ENCODE measurements at regions of chr5 and their contacts with region 1.

Region 1: GRCh38 chr5:170404402-170404801 is 15.2 kb upstream of the KCNMB1 start:
- DNase-seq: no peak
- H3K4me3 ChIP-seq: no peak overlapping the region
- CTCF ChIP-seq: no peak

Region 2: DNA sequence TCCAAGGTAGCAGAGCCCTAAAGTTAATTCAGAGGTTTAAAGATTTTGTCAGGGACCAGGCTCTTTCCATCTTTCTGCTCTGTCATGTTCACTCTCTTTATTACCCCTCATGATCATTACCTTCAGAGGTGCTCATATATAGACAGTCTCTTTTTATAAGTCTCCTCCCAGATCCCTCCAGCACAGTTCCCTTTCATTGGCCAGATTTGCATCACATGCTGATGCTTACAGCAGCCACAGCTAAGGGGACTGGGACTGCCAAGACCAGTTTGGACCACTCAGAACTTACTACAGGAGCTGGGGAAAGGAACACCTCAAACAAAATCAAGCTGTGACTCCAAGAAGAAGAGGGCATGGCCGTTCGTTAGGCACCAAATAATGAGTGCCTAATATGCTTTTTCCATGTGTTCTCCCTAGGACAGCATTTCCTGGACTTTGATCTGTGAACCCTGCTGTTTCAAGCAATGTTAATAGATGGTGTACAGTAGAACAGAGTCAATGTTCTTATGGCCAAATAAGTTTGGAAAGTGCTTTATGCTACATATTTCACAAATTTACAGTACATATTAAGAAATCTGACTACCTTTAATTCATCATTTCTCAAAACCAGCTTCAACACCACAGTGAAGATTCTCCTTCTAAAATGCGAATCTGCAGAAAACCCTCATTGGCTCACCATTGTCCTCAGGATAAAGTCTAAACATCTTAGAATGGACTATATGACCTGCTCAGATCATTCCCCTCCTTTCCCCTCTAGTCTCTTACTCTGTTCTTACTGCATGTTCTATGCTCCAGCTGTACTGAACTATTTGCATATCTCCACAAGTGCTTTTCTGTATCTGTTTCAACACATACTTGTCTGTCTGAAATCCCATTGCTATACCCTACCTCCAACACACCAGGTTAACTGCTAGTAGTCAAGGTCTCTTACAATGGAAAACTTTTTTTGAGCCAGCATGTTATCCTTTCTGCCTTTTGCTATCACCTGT is 168.2 kb before region 1 on chr5:
- in situ Hi-C with region 1: loop called (anchors 10 kb)
- DNase-seq: no peak
- H3K4me3 ChIP-seq: no peak overlapping the region
- CTCF ChIP-seq: no peak

Region 3: DNA sequence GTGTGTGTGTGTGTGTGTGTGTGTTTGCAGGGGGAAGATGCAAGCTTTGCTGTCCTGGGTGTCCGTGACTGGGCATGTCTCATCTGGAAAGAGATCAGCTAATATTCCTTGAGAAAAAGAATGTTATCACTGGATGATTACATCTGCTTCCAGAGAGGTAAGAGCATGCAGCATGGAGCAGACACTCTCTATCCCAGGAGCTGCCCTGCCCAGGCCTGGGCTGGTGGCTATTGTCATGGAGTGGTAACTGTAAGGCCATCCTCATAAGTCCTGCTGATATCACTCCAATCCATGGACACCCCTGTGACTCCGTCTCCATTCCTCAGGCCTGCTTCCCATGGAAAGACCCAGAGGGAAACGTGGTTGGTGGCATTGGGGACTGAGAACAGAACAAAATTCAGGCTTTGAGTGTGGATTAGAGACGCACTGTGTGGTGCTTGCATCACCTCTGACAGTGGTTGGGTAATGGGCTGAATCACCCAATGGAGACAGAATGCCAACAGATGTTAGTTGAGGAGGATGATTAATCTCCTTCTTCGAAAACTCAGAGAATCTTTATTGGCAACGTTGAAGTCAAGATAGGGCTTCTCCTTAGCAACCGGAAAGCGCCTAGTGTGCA is 47.5 kb after region 1 on chr5:
- in situ Hi-C with region 1: no loop called
- DNase-seq: no peak
- H3K4me3 ChIP-seq: no peak overlapping the region
- CTCF ChIP-seq: no peak